ENCODE measurements at regions of chr17 and their contacts with region 1.

Region 1: DNA sequence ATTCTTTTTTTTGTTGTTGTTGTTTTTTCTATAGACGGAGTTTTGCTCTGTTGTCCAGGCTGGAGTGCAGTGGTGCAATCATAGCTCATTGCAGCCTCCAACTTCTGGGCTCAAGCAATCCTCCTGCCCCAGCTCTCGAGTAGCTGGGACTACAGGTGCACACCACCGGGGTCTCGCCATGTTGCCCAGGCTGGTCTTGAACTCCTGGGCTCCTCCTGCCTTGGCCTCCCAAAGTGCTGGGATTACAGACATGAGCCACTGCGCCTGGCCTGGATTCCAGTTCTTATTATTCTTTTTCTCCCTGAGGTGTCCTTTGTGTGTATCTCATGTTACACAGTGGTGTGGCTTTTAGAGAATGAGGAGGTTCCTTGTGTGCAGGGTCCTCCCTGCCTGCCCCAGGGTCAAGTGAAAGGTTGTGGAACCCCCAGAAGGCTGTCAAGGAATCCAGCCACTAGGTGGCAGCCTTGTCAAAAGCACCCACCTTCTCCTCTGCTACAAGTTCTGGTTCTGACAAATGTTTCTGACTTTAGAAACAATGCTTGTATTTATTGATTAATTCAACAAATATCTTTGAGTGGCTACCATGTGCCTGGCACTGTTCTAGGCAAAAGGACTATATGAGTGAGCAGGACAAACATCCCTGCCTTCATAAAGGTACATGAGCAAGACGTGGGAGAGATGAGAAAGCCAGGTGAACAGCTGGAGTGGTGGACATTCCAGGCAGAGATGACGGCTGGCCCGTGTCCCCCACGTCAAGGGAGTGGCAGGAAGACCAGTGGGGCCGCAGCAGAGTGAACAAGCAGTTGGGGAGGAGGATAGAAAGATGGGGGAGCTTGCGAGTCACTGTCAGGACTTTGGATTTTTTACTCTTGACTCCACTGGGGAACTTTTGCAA is 112.4 kb downstream of the SPECC1 start:
- DNase-seq: peak; percentile 7
- H3K4me3 ChIP-seq: no peak overlapping the region
- CTCF ChIP-seq: peak; percentile 77

Region 2: DNA sequence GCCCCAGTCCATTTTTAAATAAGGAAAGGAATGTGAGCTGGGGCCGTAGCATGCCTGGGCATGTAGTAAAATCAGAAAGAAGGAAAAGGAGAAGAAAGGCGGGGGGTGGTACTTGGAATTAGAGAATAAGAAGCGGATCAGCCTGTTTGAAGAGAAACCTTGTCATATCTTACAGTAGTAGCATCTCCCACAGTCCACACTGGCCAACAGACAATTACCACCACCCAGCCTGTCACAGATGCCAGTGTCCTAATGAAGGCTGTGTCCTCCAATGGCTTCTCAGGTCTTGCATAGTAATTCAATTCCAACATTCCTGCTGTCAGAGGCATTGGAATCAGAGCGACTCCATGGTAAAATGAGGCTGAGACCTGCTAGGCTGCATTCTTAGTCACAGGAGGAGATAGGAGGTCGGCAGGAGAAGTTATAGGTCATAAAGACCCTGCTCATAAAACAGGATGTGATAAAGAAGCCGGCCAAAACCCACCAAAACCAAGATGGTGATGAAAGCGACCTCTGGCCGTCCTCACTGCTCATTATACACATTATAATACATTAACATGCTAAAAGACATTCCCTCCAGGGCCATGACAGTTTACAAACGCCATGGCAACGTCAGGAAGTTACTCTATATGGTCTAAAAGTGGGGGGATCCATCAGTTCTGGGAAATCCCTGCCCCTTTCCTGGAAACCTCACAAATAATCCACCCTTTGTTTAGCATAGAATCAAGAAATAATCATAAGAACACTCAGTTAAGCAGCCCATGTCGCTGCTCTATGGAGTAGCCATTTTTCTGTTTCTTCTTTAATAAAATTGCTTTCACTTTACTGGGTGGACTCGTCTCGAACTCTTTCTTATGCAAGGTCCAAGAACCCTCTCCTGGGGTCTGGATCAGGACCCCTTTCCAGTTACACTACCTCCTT is 134.4 kb before region 1 on chr17:
- CTCF ChIA-PET with region 1: interaction called, 95 read pairs
- POLR2A ChIA-PET with region 1: no interaction called
- DNase-seq: no peak
- H3K4me3 ChIP-seq: no peak overlapping the region
- CTCF ChIP-seq: no peak

Region 3: DNA sequence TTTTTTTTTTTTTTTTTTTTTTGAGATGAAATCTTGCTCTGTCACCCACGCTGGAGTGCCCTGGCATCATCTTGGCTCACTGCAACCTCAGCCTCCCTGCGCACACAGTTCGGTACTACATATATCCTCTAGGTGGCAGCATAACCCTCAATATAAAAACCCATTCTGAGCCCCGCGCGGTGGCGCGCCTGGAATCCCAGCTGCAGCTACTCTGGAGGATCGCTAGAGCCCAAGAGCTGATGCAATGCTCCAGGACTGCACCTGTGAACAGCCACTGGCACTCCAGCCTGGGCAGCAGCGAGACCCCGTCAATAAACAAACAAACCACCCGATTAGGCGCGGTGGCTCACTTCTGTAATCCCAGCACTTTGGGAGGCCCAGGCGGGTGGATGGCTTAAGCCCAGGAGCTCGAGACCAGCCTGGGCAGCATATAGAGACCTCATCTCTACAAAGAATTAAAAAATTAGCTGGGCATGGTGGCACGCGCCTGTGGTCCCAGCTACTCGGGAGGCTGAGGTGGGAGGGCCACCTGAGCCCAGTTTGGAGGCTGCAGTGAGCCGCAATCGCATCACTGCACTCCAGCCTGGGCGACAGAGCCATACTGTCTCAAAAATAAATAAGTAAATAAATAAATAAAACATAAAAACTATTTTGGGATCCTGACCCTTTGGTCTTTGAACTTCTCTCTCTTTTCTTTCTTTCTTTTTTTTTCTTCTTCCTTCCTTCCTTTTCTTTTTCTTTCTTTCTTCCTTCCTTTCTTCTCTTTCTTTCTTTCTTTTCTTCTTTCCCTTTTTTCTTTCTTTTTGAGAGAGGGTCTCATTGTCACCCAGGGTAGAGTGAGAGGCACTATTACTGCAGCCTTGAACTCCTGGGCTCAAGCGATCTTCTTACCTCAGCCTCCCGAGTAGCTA is 128.5 kb before region 1 on chr17:
- CTCF ChIA-PET with region 1: interaction called, 95 read pairs
- POLR2A ChIA-PET with region 1: no interaction called
- DNase-seq: peak; percentile 26
- H3K4me3 ChIP-seq: no peak overlapping the region
- CTCF ChIP-seq: peak; percentile 62